GM12878 (cell line): ENCODE measurements at regions of chr14 and their contacts with region 1.

Region 1: DNA sequence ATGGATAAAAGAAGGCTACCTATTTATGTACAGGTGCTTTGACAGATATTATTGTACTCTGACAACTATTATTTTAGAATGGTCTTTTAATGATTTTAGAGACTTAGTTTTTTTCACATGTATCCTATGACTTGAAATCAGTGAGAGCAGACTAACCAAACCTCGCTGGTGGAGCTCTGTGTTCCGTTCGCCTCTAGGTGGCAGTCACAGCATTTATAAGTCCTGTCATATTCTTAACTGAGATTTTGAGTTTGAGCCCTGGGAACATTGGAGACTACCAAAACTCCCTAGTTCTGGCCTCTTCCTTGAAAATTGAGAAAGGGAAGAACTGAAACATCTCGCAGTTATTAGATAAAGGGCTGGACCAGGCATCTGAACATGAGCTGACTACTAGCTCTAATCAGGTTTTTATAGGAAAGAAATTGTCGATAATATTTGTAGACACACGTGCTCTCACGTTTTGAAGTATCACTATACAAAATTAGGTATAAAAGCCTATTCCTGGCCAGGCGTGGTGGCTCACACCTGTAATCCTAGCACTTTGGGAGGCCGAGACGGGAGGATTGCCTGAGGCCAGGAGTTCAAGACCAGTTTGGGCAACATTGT is 48.3 kb downstream of the TTLL5 start:
- DNase-seq: peak; percentile 24
- ATAC-seq: peak; percentile 84
- H3K4me3 ChIP-seq: no peak overlapping the region
- H3K27ac ChIP-seq: no peak overlapping the region
- H3K4me1 ChIP-seq: peaks cover 6% of the 10 kb centered on the region
- H3K27me3 ChIP-seq: no peaks in the 10 kb centered on the region
- CTCF ChIP-seq: peak; percentile 75 to 81 (median 81)
- EP300 ChIP-seq: no peak
- POLR2A ChIP-seq: no peak
- RAD21 ChIP-seq: peak; percentile 82

Region 2: DNA sequence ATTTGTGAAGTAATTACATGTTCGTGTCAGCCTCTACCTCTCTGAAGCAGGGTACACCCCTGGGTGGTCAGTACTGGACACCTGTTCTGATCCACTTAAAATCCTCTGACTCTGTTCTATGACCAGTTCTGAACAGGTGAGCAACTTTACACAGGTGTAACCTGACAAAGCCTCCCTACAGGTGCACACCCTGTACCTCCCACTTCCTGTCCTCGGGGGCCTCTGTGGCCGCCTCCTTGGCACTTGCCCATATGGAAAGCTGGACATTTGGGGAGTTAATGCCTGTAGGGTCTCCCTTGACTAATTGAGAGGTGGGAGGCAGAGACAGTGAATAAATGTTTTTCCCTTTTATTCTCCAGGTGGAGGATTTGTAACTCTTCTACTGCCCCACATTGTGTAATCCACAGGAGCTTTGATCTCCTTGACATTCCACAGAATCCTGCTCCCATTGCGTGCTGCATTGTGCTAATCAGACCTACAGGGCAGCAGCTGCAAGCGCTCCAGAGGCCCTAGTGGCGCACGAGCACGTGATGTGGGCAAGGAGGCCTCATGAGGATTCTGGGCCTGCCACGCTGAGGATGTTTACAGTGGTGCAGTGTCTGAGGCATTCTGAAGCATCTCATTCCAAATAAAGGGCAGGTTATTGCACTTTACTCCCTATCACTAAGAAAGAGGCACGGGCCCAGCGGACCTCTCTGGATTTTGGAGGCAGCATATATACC is 232.9 kb before region 1 on chr14:
- CTCF ChIA-PET with region 1: no interaction called
- POLR2A ChIA-PET with region 1: no interaction called
- RAD21 ChIA-PET with region 1: no interaction called
- SMC1A ChIA-PET with region 1: no interaction called
- in situ Hi-C with region 1: no loop called
- intact Hi-C with region 1: no loop called
- DNase-seq: no peak
- ATAC-seq: no peak
- H3K4me3 ChIP-seq: no peak overlapping the region
- H3K27ac ChIP-seq: no peak overlapping the region
- H3K4me1 ChIP-seq: peaks cover 29% of the 10 kb centered on the region
- H3K27me3 ChIP-seq: no peaks in the 10 kb centered on the region
- CTCF ChIP-seq: no peak
- EP300 ChIP-seq: no peak
- POLR2A ChIP-seq: no peak
- RAD21 ChIP-seq: no peak

Region 3: DNA sequence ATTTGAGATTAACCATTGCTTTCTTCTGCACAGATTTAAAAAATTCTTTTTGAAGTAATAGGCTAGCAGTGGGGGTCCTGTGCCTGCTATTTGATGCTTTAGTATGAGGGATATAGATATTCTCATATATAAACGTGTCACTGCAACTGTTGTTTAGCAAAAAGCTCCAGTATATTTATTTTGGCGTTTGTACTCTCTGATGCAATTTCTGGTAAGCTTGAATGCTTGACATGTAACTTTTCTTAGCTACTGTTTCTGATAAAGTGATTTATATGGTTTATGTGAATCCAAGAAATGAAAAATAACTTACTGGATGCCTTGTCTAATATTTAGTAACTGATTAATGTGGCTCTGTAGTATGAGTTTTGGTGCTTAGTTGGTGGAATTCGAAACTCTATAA is 28.9 kb after region 1 on chr14:
- CTCF ChIA-PET with region 1: interaction called, 28 read pairs
- POLR2A ChIA-PET with region 1: no interaction called
- RAD21 ChIA-PET with region 1: no interaction called
- SMC1A ChIA-PET with region 1: no interaction called
- in situ Hi-C with region 1: no loop called
- intact Hi-C with region 1: no loop called
- DNase-seq: no peak
- ATAC-seq: no peak
- H3K4me3 ChIP-seq: no peak overlapping the region
- H3K27ac ChIP-seq: no peak overlapping the region
- H3K4me1 ChIP-seq: no peaks in the 10 kb centered on the region
- H3K27me3 ChIP-seq: no peaks in the 10 kb centered on the region
- CTCF ChIP-seq: no peak
- EP300 ChIP-seq: no peak
- POLR2A ChIP-seq: no peak
- RAD21 ChIP-seq: no peak

Region 4: GRCh38 chr14:75875958-75876357 is 166.6 kb after region 1 on chr14:
- CTCF ChIA-PET with region 1: interaction called, 13 read pairs
- POLR2A ChIA-PET with region 1: no interaction called
- RAD21 ChIA-PET with region 1: interaction called, 5 read pairs
- SMC1A ChIA-PET with region 1: interaction called, 9 read pairs
- in situ Hi-C with region 1: no loop called
- intact Hi-C with region 1: loop called (anchors 5 kb)
- DNase-seq: peak; percentile 80
- ATAC-seq: peak; percentile 100
- H3K4me3 ChIP-seq: no peak overlapping the region
- H3K27ac ChIP-seq: no peak overlapping the region
- H3K4me1 ChIP-seq: no peaks in the 10 kb centered on the region; the same call in 1 of the 2 replicates
- H3K27me3 ChIP-seq: no peaks in the 10 kb centered on the region
- CTCF ChIP-seq: no peak
- EP300 ChIP-seq: peak in 1 of 2 experiments; percentile 68; a peak in 2 of 4 replicates
- POLR2A ChIP-seq: no peak
- RAD21 ChIP-seq: no peak

Region 5: DNA sequence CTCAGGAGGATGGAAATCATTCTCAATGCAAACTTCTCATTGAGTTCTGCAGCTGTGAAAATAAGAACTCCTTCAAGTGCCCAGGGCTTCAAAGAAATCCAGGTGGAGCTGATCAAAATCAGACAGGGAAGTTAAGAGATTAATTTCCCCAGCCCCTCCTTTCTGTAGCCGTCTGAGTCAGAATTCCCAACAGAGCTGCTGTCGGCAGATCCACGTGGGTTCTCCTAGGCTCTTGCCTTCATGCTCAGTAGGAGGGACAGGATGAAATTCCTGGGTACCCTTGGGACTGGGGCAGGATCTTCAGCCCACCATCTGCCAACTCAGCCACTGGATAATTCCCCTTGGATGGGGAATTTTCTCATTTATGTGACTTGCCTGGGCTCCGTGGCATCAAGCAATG is 259.1 kb after region 1 on chr14:
- CTCF ChIA-PET with region 1: interaction called, 16 read pairs
- POLR2A ChIA-PET with region 1: interaction called, 3 read pairs
- RAD21 ChIA-PET with region 1: interaction called, 3 read pairs
- SMC1A ChIA-PET with region 1: interaction called, 3 read pairs
- in situ Hi-C with region 1: no loop called
- intact Hi-C with region 1: no loop called
- DNase-seq: no peak
- ATAC-seq: no peak
- H3K4me3 ChIP-seq: no peak overlapping the region
- H3K27ac ChIP-seq: no peak overlapping the region
- H3K4me1 ChIP-seq: peaks cover 6% of the 10 kb centered on the region; the same call in 1 of the 2 replicates
- H3K27me3 ChIP-seq: no peaks in the 10 kb centered on the region
- CTCF ChIP-seq: no peak
- EP300 ChIP-seq: no peak
- POLR2A ChIP-seq: no peak
- RAD21 ChIP-seq: no peak

Region 6: GRCh38 chr14:75989134-75989533 is 279.8 kb after region 1 on chr14:
- CTCF ChIA-PET with region 1: interaction called, 276 read pairs
- POLR2A ChIA-PET with region 1: no interaction called
- RAD21 ChIA-PET with region 1: interaction called, 179 read pairs
- SMC1A ChIA-PET with region 1: interaction called, 131 read pairs
- in situ Hi-C with region 1: loop called (anchors 5 kb)
- intact Hi-C with region 1: no loop called
- DNase-seq: no peak
- ATAC-seq: no peak
- H3K4me3 ChIP-seq: no peak overlapping the region
- H3K27ac ChIP-seq: no peak overlapping the region
- H3K4me1 ChIP-seq: peaks cover 15% of the 10 kb centered on the region
- H3K27me3 ChIP-seq: no peaks in the 10 kb centered on the region
- CTCF ChIP-seq: no peak
- EP300 ChIP-seq: no peak
- POLR2A ChIP-seq: no peak
- RAD21 ChIP-seq: no peak

Region 7: GRCh38 chr14:76352639-76353281 is 643.5 kb after region 1 on chr14:
- CTCF ChIA-PET with region 1: interaction called, 11 read pairs
- POLR2A ChIA-PET with region 1: no interaction called
- RAD21 ChIA-PET with region 1: interaction called, 6 read pairs
- SMC1A ChIA-PET with region 1: interaction called, 8 read pairs
- in situ Hi-C with region 1: no loop called
- intact Hi-C with region 1: no loop called
- DNase-seq: peak; percentile 4
- ATAC-seq: peak; percentile 98
- H3K4me3 ChIP-seq: no peak overlapping the region
- H3K27ac ChIP-seq: no peak overlapping the region
- H3K4me1 ChIP-seq: 0 out of 2 replicates have a peak, but pooled peaks cover 3% of the 10 kb centered on the region
- H3K27me3 ChIP-seq: no peaks in the 10 kb centered on the region
- CTCF ChIP-seq: peak; percentile 71 to 89 (median 86)
- EP300 ChIP-seq: no peak
- POLR2A ChIP-seq: no peak
- RAD21 ChIP-seq: peak; percentile 93